WTC11 (cell line): ENCODE measurements at regions of chr5 and their contacts with region 1.

Region 1: GRCh38 chr5:17151686-17152085 is 65.7 kb upstream of the BASP1 start:
- DNase-seq: peak; percentile 47
- ATAC-seq: peak; percentile 86
- H3K4me3 Mint-ChIP-seq: no peak overlapping the region
- H3K27ac Mint-ChIP-seq: peak overlapping the region; percentile 42; the same call in 1 of the 2 replicates
- H3K4me1 Mint-ChIP-seq: peaks cover 24% of the 10 kb centered on the region
- H3K27me3 Mint-ChIP-seq: peaks cover 31% of the 10 kb centered on the region
- CTCF ChIP-seq: no peak

Region 2: GRCh38 chr5:16957304-16958196 is 194.1 kb before region 1 on chr5:
- CTCF ChIA-PET with region 1: no interaction called
- POLR2A ChIA-PET with region 1: interaction called, 10 read pairs
- DNase-seq: no peak
- ATAC-seq: no peak
- H3K4me3 Mint-ChIP-seq: no peak overlapping the region
- H3K27ac Mint-ChIP-seq: no peak overlapping the region
- H3K4me1 Mint-ChIP-seq: peaks cover 4% of the 10 kb centered on the region
- H3K27me3 Mint-ChIP-seq: no peaks in the 10 kb centered on the region
- CTCF ChIP-seq: no peak

Region 3: GRCh38 chr5:17081142-17081541 is 70.5 kb before region 1 on chr5:
- CTCF ChIA-PET with region 1: no interaction called
- POLR2A ChIA-PET with region 1: no interaction called
- DNase-seq: no peak
- ATAC-seq: no peak
- H3K4me3 Mint-ChIP-seq: no peak overlapping the region
- H3K27ac Mint-ChIP-seq: no peak overlapping the region
- H3K4me1 Mint-ChIP-seq: no peaks in the 10 kb centered on the region
- H3K27me3 Mint-ChIP-seq: no peaks in the 10 kb centered on the region
- CTCF ChIP-seq: no peak

Region 4: DNA sequence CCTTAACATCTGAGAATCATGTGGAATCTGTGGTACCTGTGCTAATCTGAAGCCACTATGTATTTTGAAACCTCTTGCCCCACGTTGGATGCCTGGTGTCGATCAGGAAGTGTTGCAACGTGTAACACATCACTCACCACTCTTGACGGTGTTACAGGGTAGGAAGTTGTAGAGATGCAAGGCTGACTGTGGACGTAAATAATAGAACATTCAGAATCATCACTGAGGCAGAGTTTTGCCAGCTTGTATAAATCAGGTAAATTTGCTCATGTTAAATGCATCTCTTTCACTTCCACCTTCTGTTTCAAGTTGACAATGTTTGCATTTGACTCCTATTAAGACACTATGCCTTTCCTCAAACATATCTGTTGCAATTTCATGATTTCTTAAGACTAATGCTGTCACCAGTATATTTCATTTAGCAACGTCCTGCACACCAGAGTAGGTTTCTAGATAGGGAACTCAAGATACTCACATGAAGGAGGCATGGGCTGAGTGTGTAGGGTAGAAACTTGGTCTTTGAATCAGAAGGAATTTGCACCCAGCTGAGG is 103.9 kb after region 1 on chr5:
- CTCF ChIA-PET with region 1: no interaction called
- POLR2A ChIA-PET with region 1: no interaction called
- DNase-seq: no peak
- ATAC-seq: no peak
- H3K4me3 Mint-ChIP-seq: no peak overlapping the region
- H3K27ac Mint-ChIP-seq: peak overlapping the region; percentile 46
- H3K4me1 Mint-ChIP-seq: peaks cover 58% of the 10 kb centered on the region
- H3K27me3 Mint-ChIP-seq: no peaks in the 10 kb centered on the region
- CTCF ChIP-seq: no peak